CD4-positive, alpha-beta T cell (primary cell): ENCODE measurements at regions of chr5 and their contacts with region 1.

Region 1: GRCh38 chr5:73540192-73540591 is 25.2 kb downstream of the ANKRA2 start:
- DNase-seq: no peak
- ATAC-seq: no peak
- H3K4me3 ChIP-seq: no peak overlapping the region
- H3K4me3 Mint-ChIP-seq: no peak overlapping the region
- H3K27ac ChIP-seq: no peak overlapping the region
- H3K27ac Mint-ChIP-seq: no peak overlapping the region
- H3K4me1 ChIP-seq: peaks cover 4% of the 10 kb centered on the region
- H3K4me1 Mint-ChIP-seq: no peaks in the 10 kb centered on the region
- H3K27me3 ChIP-seq: peaks cover 6 to 10% of the 10 kb centered on the region in 2 experiments
- H3K27me3 Mint-ChIP-seq: peaks cover 44% of the 10 kb centered on the region
- CTCF ChIP-seq: no peak

Region 2: GRCh38 chr5:73088026-73088425 is 452.2 kb before region 1 on chr5:
- CTCF ChIA-PET with region 1: no interaction called
- POLR2A ChIA-PET with region 1: no interaction called
- intact Hi-C with region 1: loop called in 1 of 2 experiments (anchors 2 kb)
- DNase-seq: no peak
- ATAC-seq: no peak
- H3K4me3 ChIP-seq: no peak overlapping the region
- H3K4me3 Mint-ChIP-seq: no peak overlapping the region
- H3K27ac ChIP-seq: no peak overlapping the region
- H3K27ac Mint-ChIP-seq: no peak overlapping the region
- H3K4me1 ChIP-seq: no peaks in the 10 kb centered on the region
- H3K4me1 Mint-ChIP-seq: no peaks in the 10 kb centered on the region
- H3K27me3 ChIP-seq: no peaks in the 10 kb centered on the region
- H3K27me3 Mint-ChIP-seq: peaks cover 30% of the 10 kb centered on the region
- CTCF ChIP-seq: no peak

Region 3: DNA sequence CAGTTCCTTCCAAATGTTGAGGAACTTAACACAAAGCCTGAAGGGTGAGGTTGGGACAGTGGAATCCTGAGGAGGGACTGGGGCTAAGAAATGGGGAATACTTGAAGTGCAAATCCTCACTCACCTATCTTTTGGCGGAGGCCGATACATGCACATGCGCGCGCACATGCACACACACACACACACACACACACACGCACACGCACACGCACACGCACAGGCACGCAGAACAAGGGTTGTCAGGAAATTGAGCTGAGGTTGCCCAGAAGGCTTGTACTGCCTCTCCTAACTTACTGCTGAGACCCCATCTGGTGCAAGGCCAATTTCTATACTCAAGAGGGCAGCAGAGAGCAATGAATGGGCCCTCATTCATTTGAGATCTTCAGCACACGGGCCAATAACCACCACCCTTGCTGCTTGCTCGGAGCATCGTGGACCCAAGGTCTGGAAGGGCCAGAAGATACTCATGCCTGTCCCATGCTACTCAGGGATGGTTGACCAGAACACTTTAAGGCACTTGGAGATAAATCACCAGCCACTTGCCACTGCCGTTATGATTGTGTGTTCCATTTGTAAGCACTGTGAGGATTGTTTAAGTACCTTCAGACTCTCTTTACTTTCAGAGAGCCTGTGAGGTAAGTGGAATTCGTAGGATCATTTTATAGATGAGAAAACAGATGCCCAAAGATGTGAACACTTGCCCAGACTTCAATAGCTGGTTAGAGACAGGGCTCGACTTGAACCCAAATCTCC is 20.5 kb before region 1 on chr5:
- CTCF ChIA-PET with region 1: interaction called, 19 read pairs
- POLR2A ChIA-PET with region 1: interaction called, 3 read pairs
- intact Hi-C with region 1: loop called (anchors 1 kb)
- DNase-seq: peak; percentile 38 to 89 (median 56)
- ATAC-seq: peak; percentile 99
- H3K4me3 ChIP-seq: no peak overlapping the region
- H3K4me3 Mint-ChIP-seq: peak overlapping the region; percentile 20
- H3K27ac ChIP-seq: no peak overlapping the region
- H3K27ac Mint-ChIP-seq: peak overlapping the region; percentile 3
- H3K4me1 ChIP-seq: peaks cover 9% of the 10 kb centered on the region
- H3K4me1 Mint-ChIP-seq: peaks cover 8% of the 10 kb centered on the region
- H3K27me3 ChIP-seq: no peaks in the 10 kb centered on the region
- H3K27me3 Mint-ChIP-seq: no peaks in the 10 kb centered on the region
- CTCF ChIP-seq: peak; percentile 76

Region 4: DNA sequence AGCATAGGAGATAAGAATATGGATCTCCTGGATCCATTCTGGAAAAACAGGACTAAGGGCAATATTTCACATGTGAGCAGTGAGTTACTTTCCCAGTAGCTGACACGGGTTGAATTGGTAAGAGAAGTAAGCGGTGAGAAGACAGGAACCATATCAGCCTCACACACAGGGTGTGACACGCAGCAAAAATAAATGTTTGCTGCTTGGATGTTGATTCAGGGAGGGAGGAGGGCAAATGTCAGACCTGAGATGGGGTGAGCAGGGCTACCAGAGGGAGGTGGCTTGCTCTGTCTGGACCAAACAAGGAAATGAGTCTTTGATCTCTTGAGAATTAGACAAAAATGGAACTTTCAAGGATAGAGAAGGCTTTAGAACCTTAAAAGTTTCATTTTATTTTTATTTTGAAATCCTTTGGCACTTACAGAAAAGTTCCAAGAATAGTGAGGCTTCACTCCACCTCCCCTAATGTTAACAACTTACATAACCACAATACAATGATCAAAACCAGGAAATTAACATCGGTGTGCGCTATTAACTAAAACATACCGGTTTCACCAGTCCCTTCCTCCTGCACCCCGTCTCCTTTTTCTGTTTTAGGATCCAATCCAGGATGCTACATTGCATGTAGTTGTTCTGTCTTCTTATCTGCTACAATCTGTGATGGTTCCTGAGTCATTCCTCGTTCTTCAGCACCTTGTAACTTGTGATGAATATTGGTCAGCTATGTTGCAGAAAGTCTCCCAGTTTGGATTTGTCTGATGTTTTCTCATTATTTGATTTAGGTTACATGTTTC is 65.2 kb after region 1 on chr5:
- CTCF ChIA-PET with region 1: no interaction called
- POLR2A ChIA-PET with region 1: no interaction called
- intact Hi-C with region 1: no loop called
- DNase-seq: no peak
- ATAC-seq: no peak
- H3K4me3 ChIP-seq: no peak overlapping the region
- H3K4me3 Mint-ChIP-seq: no peak overlapping the region
- H3K27ac ChIP-seq: no peak overlapping the region
- H3K27ac Mint-ChIP-seq: no peak overlapping the region
- H3K4me1 ChIP-seq: no peaks in the 10 kb centered on the region
- H3K4me1 Mint-ChIP-seq: no peaks in the 10 kb centered on the region
- H3K27me3 ChIP-seq: no peaks in the 10 kb centered on the region
- H3K27me3 Mint-ChIP-seq: peaks cover 13% of the 10 kb centered on the region
- CTCF ChIP-seq: no peak